BJ (cell line): ENCODE measurements at regions of chr7 and their contacts with region 1.

Region 1: DNA sequence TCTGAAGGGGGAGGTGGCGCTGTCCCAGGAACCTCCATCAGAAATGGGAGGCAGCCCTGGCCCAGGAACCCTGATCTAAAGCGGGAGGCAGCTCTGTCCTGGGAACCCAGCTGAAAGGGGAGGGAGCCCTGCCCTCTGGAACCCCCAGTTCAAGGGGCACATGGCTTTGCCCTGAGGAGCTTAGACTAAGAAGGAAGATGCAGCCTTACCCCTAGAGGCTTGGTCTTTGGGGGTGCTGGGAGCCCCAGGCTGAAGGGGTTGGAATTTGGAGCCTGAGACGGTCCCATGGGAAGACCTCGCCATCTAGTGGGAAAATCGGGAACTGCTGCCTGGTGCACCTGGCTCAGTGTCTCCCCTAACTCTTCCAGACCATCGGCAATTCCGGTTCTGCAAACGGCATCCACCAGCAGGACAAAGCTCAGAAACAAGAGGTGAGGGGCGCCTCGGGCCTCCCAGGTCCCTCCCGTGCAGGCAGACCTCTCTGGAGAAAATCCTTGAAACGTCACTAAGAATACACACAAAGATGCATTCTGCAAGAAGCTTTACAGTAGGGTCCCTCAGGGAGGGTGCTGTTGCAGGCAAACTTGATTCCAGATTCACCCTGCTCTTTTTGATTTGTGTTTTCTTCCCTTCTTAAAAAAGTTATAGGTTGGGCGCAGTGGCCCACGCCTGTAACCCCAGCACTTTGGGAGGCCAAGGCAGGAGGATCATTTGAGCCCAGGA is 52.4 kb upstream of the GTF2IRD1 start:
- DNase-seq: no peak
- H3K4me3 ChIP-seq: no peak overlapping the region
- H3K27me3 ChIP-seq: no peaks in the 10 kb centered on the region
- CTCF ChIP-seq: peak; percentile 96

Region 2: GRCh38 chr7:74068393-74069085 is 332.8 kb before region 1 on chr7:
- CTCF ChIA-PET with region 1: interaction called, 15 read pairs
- POLR2A ChIA-PET with region 1: no interaction called
- DNase-seq: no peak
- H3K4me3 ChIP-seq: no peak overlapping the region
- H3K27me3 ChIP-seq: no peaks in the 10 kb centered on the region
- CTCF ChIP-seq: no peak

Region 3: DNA sequence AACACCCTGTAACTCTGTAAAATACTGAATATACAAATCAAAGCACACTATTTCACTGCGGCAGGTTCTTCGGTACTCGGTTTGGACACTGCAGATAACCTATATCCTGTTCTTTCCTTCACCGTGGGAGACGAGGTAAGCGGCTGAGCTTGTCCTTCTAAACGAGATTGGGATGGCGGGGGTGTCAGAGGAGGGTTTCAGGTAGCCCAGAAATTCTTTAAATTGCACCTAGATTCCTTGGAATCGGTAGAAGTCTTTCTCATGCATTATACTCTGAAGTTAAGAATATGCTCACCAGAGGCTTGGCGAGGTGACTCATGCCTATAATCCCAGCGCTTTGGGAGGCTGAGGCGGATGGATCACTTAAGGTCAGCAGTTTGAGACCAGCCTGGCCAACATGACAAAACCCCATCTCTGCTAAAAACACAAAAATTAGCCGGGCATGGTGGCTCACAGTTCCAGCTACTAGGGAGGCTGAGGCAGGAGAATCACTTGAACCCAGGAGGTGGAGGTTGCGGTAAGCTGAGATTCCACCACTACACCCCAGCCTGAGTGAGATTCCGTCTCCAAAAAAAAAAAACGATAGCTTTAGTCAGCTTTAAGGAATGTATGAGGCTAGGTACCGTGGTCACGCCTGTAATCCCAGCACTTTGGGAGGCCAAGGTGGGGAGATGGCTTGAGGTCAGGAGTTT is 201.6 kb before region 1 on chr7:
- CTCF ChIA-PET with region 1: interaction called, 416 read pairs
- POLR2A ChIA-PET with region 1: no interaction called
- DNase-seq: no peak
- H3K4me3 ChIP-seq: no peak overlapping the region
- H3K27me3 ChIP-seq: no peaks in the 10 kb centered on the region
- CTCF ChIP-seq: no peak

Region 4: DNA sequence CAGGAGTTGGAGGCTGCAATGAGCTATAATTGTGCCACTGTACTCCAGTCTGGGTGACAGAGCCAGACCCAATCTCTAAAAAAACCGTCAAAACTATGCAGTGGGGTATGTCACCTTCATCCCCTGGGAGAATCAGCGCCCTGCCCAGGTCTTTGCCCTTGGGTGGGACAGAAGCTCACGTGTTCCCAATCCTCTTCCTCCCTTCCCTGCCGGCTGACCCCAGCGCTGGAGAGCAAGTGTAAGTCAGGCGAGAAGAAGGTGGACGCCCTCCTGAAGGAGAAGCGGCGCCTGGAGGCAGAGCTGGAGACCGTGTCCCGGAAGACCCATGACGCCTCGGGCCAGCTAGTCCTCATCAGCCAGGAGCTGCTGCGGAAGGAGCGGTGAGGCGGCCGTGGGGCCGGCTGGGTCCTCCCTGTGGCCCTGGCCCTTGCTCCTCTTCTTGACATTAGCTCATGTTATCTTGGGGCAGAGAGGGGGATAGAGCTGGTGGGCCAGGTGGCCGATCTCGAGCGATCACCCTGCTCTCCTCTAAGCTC is 12.3 kb before region 1 on chr7:
- CTCF ChIA-PET with region 1: interaction called, 23 read pairs
- POLR2A ChIA-PET with region 1: no interaction called
- DNase-seq: no peak
- H3K4me3 ChIP-seq: no peak overlapping the region
- H3K27me3 ChIP-seq: no peaks in the 10 kb centered on the region
- CTCF ChIP-seq: no peak

Region 5: GRCh38 chr7:74483402-74484336 is 82.4 kb after region 1 on chr7:
- CTCF ChIA-PET with region 1: no interaction called
- POLR2A ChIA-PET with region 1: no interaction called
- DNase-seq: peak; percentile 33
- H3K4me3 ChIP-seq: no peak overlapping the region
- H3K27me3 ChIP-seq: no peaks in the 10 kb centered on the region
- CTCF ChIP-seq: no peak

Region 6: DNA sequence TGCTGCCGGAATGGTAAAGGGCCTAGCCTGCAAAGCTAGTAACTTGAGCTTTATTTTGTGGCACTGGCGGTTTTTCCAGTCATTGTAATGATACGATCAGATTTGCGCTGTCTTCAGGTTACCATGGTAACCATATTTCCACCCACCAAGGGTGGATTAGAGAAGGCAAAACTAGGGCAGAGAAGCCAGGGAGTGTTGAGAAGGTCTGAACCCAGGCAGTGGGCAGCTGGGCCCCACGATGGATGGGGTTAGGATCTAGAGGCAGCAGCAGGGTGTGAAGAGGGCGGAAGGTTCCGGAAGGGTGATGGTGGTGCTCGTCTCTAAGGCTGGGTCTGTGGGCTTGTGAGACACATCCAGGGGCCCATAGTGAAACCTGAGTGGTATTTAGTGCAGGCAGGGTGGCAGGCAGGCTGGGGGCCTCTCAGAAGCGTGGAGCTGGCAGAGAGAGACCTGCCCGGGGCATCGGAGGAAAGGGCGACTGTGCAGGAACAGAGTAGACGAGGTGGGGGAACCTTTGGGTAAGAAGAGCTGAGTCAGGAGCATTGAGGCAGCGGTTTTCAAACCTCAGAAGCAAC is 168.3 kb after region 1 on chr7:
- CTCF ChIA-PET with region 1: interaction called, 10 read pairs
- POLR2A ChIA-PET with region 1: no interaction called
- DNase-seq: no peak
- H3K4me3 ChIP-seq: no peak overlapping the region
- H3K27me3 ChIP-seq: no peaks in the 10 kb centered on the region
- CTCF ChIP-seq: no peak